Activated T-helper 2 cell treated with anti-CD3 and anti-CD28 coated beads, Interferon-gamma antibody, Interleukin-2, Interleukin-4, amounts not matched to agents 10 μg/mL and 5 μg/mL and 100 μg/mL, durations not matched to agents 14 hours and 24 hours and 36 hours (primary cell): ENCODE measurements at regions of chr18 and their contacts with region 1.

Region 1: GRCh38 chr18:62714671-62715435 is 488 bp upstream of the PHLPP1 start:
- DNase-seq: peak; percentile 90
- H3K4me3 Mint-ChIP-seq: peak overlapping the region; percentile 80
- H3K27ac Mint-ChIP-seq: peak overlapping the region; percentile 76
- H3K4me1 Mint-ChIP-seq: peaks cover 30% of the 10 kb centered on the region
- H3K27me3 Mint-ChIP-seq: peaks cover 12% of the 10 kb centered on the region

Region 2: DNA sequence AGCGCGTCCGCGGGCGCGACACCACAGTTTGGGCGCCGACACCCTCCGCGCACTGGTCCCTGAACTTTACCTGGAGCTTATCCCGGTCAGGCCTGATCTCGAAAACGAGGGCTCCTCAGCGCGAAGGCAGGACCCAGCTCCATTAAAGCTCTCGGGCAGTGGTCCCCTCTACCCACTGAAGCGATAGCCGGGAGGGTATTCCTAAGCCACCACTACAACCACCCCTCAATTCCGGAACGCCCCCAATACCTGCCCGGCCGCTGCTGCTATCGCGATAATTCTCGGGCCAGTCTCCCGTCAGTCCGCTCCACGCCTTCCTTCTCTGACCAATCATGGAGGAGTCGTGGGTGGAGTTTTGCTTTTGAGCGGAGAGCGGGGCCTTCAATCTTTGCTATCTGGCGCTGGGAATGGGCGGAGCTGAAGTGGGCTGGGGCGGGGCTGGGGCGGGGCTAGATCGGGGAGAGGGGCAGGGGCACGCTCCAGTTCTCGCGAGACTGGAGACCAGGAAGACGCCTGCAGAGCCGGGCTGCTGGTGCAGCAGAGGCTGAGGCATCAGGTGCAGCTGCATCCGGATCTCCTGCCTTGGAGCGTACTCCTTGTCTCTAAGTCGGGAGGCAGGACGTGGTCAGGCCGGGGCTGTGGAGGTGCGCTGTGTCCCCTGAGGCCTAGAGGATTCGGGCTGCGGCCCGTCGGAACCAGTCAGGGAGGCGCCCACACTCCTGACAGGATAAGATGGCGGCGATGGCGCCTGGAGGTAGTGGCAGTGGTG is 527.9 kb before region 1 on chr18 and contains the starts of genes PIGN and RELCH:
- intact Hi-C with region 1: loop called (anchors 1 kb)
- DNase-seq: peak; percentile 94
- H3K4me3 Mint-ChIP-seq: peak within 1 kb of the TSS; percentile 97
- H3K27ac Mint-ChIP-seq: peak within 1 kb of the TSS; percentile 92
- H3K4me1 Mint-ChIP-seq: peaks cover 42% of the 10 kb centered on the region
- H3K27me3 Mint-ChIP-seq: no peaks in the 10 kb centered on the region
- total RNA-seq, gene PIGN: 29.4 and 29.6 TPM in 2 replicates
- total RNA-seq, gene RELCH: 29.1 and 32.3 TPM in 2 replicates

Region 3: DNA sequence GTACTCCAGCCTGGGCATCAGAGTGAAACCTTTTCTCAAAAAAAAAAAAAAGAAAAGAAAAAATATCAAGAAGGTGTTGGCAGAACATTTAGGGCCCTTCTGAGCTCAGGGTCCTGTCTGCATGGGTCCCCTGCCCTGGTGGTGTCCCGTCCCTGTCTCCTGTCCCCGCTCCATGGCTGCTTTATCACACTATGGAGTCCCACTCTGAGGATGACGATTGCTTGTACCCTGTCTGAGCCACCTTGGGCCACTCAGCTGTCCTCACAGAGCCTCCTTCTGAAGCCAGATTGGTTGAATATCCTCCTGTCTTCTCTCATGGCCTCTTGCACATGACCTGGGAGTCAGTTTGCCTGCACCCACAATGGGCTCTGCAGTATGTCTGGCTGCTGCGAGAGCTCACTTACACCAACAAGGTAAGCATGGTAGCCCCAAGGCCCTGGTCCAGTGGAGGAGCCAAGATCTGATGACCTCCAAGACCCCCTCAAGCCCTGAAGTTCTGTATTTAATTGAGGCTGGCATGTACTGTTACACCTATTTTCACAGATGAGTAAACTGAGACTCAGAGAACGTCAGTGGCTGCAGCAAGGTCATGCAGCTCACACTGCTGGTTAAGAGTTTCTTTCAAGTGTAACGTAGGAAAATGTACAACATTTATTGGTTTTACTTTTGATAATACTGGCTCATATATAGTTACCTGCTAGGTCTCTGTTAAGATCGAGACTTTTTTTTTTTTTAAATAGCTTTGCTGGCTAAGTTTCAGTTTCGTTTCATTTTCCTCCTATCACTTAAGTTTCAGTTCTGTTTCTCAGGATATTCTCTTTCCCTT is 209.0 kb before region 1 on chr18:
- intact Hi-C with region 1: loop called (anchors 1 kb)
- DNase-seq: peak; percentile 29
- H3K4me3 Mint-ChIP-seq: peak overlapping the region; percentile 73
- H3K27ac Mint-ChIP-seq: peak overlapping the region; percentile 97
- H3K4me1 Mint-ChIP-seq: peaks cover 20% of the 10 kb centered on the region
- H3K27me3 Mint-ChIP-seq: no peaks in the 10 kb centered on the region

Region 4: DNA sequence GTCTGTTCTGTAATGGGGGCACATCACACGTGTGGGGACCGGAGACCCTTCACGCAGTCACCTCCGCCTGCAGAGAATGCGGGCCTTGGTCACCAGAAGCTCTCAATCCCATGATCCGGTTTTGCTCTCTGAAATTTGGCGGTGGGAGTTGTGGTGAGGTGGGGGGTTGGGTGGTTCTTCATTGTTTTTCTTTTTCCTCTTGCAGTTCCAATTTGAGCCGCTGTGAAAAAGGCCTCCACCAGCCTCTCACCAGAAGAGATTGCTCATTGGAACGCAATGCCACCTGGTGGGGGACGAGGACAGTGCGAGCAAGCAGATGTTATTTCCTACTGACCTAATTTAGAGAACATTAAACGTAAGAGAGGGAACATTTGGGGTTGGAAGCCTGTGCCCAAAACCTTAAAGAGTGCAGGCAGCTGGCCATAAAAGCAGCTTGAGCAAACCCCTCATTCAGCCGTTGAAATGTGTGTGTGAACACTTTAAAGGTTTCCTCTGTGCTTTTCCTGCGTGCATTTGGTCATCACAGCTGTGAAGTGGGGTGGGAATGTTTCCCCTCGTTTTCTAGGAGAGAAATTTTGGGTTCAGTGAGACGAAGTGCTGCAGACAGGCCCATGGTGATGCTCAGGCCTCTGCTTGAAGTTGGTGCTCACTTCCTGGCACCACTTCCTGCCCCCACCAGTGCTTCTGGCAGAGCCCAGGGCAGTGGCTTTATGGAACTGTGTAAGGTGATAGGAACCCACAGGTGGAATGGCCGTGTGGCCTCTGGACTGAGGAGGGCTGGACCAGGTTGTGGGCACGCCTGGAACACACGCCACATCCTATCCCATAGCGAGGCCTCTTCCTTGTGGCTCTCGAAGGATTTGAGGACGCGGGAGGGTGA is 130.4 kb before region 1 on chr18:
- intact Hi-C with region 1: loop called (anchors 1 kb)
- DNase-seq: peak; percentile 77
- H3K4me3 Mint-ChIP-seq: peak overlapping the region; percentile 28
- H3K27ac Mint-ChIP-seq: peak overlapping the region; percentile 46
- H3K4me1 Mint-ChIP-seq: peaks cover 35% of the 10 kb centered on the region
- H3K27me3 Mint-ChIP-seq: no peaks in the 10 kb centered on the region

Region 5: GRCh38 chr18:62651276-62652056 is 63.4 kb before region 1 on chr18:
- intact Hi-C with region 1: no loop called
- DNase-seq: no peak
- H3K4me3 Mint-ChIP-seq: no peak overlapping the region
- H3K27ac Mint-ChIP-seq: no peak overlapping the region
- H3K4me1 Mint-ChIP-seq: no peaks in the 10 kb centered on the region
- H3K27me3 Mint-ChIP-seq: peaks cover 18% of the 10 kb centered on the region

Region 6: GRCh38 chr18:62771494-62772270 is 56.8 kb after region 1 on chr18:
- intact Hi-C with region 1: loop called (anchors 1 kb)
- DNase-seq: no peak
- H3K4me3 Mint-ChIP-seq: peak overlapping the region; percentile 24
- H3K27ac Mint-ChIP-seq: peak overlapping the region; percentile 87
- H3K4me1 Mint-ChIP-seq: peaks cover 58% of the 10 kb centered on the region
- H3K27me3 Mint-ChIP-seq: no peaks in the 10 kb centered on the region

Region 7: DNA sequence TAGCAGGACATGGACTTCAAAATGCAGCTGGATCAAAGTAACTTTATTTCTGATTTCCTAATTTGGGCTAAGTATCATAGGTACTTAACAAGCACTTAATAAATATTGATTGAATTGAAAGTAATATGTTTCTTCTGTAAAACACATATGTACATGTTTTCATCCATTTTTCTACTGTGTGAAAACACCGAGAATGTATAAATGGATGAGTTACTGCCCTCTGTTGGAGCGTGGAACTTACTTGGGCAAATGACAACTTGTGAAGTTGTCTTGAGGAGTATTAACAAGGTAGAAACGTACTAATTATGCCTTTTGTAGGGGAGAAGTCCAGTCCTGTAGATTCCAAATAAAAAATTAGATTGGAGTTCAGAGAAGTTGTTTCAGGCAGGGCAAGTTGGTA is 87.7 kb after region 1 on chr18:
- intact Hi-C with region 1: loop called (anchors 1 kb)
- DNase-seq: no peak
- H3K4me3 Mint-ChIP-seq: no peak overlapping the region
- H3K27ac Mint-ChIP-seq: no peak overlapping the region
- H3K4me1 Mint-ChIP-seq: peaks cover 22% of the 10 kb centered on the region
- H3K27me3 Mint-ChIP-seq: no peaks in the 10 kb centered on the region

Region 8: DNA sequence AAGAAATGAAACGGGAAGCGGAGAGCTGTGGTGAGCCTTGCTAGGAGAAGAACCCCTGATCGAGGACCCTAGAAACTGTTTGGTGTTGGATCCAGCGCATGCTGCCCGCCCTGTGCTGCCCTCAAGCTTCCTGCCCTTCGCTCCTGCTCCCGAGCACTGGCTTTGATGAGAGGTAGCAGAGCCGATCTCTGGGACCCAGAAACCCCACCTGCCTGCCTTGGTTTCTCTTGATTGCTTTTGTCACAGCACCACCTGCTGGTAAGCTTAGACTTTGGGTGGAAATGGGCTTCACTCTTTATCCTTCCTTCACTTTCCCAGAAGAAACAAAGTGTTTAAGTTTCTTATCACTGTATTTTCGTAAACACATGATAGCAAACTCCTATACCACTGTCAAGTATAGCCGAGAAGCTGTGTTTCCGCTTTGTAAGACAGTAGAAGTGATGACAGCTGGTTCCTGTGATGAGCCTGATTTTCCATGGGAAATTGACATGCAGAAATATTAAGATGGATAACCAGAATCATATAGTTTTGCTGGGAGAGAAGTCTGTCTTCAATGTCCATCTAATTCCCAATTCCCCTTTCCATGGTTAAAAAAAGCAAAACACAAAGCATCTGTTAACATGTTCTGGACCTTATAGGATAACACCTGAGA is 267.9 kb after region 1 on chr18:
- intact Hi-C with region 1: loop called (anchors 1 kb)
- DNase-seq: peak; percentile 42
- H3K4me3 Mint-ChIP-seq: no peak overlapping the region
- H3K27ac Mint-ChIP-seq: no peak overlapping the region
- H3K4me1 Mint-ChIP-seq: peaks cover 4% of the 10 kb centered on the region
- H3K27me3 Mint-ChIP-seq: no peaks in the 10 kb centered on the region